ENCODE measurements at regions of chr7 and their contacts with region 1.

Region 1: DNA sequence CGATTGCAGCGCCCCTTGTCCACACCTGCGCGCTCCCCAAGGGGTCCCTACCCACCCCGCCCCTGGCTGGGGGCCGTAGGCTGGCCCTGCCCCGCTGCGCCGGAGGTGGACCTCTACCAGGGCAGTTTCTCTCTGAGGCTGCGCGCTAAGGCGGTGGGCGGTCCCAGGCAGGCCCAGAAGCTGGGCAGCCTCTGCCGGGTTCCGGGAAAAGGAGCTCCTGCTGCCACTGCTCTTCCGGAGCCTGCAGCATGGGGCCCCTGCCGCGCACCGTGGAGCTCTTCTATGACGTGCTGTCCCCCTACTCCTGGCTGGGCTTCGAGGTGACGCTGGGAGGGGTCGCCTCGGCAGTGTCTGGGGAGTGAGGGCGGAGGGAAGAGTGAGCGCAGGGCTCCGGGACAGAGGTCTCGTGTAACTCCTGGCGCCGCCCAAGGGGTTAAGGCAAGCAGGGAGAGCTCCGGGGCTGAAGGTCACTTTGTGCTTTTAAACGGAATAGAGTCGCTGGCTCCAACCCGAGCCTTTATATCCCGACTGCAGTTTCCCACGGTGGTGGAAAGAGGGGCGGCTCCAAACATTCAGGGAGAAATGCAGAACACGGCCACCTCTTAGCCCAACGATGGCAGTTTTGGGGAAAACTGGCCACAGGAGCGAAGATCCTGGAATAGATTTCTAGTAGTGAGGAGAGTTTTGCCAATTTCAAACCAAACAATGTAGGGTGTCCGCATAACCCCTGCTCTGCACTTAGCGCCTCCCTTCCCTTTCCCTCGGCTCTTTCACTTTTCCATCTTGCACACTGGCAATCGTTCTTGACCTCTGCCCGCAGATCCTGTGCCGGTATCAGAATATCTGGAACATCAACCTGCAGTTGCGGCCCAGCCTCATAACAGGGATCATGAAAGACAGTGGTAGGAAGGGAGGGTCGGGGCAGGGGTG is at the start of gene GSTK1:
- DNase-seq: peak; percentile 96
- total RNA-seq, gene GSTK1: 208 TPM

Region 2: GRCh38 chr7:143287935-143288826 is 24.6 kb after region 1 on chr7 and contains the start of gene CASP2:
- intact Hi-C with region 1: loop called (anchors 2 kb)
- DNase-seq: peak; percentile 99
- total RNA-seq, gene CASP2: 12.6 TPM

Region 3: DNA sequence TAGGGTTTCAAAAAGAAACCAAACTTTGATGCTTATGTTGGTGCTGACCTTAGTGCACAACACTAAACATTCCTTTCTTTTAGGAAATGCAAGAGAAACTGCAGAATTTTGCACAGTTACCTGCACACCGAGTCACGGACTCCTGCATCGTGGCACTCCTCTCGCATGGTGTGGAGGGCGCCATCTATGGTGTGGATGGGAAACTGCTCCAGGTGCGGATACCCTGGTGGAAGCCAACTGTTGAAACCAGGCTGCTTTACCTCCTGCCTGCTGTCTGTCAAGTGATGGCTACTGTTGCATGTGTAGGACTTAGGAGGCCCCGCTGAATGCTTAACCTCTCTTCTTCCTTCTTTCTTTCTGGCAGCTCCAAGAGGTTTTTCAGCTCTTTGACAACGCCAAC is 36.3 kb after region 1 on chr7:
- intact Hi-C with region 1: loop called (anchors 5 kb)
- DNase-seq: no peak

Measured in cardiac septum (tissue), 1 donor.